ENCODE measurements at regions of chr2 and their contacts with region 1.

Region 1: DNA sequence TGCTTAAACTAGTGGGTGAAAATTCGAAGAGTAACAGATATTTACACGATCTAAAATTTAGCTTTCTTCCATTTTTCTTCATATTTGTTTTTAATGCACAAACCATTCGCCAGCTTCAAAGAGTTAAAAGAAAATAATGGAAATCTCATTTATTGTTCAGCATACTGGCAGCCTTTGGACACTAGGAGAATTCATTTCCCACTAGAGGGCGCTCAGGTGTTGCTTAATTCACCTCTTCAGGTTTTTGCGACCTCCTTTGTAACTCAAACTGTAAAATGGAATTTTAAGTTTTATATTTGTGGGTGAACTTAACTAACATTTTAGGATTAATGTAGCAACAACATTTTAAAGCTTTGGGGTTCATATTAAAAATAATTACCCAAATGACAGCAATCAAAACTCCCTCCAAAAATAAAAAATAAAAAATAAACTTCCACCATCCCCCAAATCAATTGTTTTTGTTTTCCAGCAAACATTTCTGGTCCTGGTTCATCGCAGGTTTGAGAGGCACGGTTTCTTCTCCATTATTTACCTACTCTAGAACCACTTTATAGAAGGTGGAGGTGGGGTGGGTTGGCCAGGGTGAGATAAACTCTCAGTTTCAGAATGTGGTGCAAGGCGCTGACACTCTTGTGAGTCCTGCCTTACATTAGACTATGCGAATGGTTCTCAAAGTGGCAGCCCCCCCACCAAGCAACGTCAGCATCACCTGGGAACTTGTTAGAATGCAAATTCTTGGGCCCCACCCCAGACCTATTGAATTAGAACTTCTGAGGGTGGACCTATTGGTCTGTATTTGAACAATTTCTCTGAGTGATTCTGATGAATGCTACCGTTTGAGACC is 24.7 kb upstream of the PNPT1 start:
- DNase-seq: peak; percentile 66
- ATAC-seq: peak; percentile 84
- H3K4me3 ChIP-seq: no peak overlapping the region
- H3K27ac ChIP-seq: no peak overlapping the region
- H3K4me1 ChIP-seq: peaks cover 16% of the 10 kb centered on the region
- H3K27me3 ChIP-seq: peaks cover 0 to 4% of the 10 kb centered on the region in 2 experiments; a peak in 2 of 5 replicates
- CTCF ChIP-seq: peak; percentile 80
- EP300 ChIP-seq: no peak
- POLR2A ChIP-seq: no peak
- RAD21 ChIP-seq: peak; percentile 66

Region 2: DNA sequence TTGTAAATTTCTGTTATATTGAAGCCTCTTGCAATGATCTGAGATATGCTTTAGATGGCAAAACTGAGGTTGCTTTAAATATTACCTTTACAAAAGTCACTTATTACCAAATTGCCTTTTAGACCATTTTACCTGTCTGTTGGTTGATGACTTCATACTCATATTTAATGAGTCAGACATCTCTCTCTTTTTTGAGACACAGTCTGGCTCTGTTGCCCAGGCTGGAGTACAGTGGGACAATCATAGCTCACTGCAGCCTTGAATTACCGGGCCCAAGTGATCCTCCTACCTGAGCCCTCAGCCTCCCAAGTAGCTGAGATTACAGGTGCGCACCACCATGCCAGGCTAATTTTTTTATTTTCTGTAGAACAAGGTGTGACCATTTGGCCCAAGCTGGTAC is 89.5 kb before region 1 on chr2:
- CTCF ChIA-PET with region 1: no interaction called
- POLR2A ChIA-PET with region 1: no interaction called
- in situ Hi-C with region 1: no loop called
- intact Hi-C with region 1: no loop called
- DNase-seq: no peak
- ATAC-seq: no peak
- H3K4me3 ChIP-seq: no peak overlapping the region
- H3K27ac ChIP-seq: no peak overlapping the region
- H3K4me1 ChIP-seq: no peaks in the 10 kb centered on the region
- H3K27me3 ChIP-seq: no peaks in the 10 kb centered on the region
- CTCF ChIP-seq: no peak
- EP300 ChIP-seq: no peak
- POLR2A ChIP-seq: no peak
- RAD21 ChIP-seq: no peak

Region 3: DNA sequence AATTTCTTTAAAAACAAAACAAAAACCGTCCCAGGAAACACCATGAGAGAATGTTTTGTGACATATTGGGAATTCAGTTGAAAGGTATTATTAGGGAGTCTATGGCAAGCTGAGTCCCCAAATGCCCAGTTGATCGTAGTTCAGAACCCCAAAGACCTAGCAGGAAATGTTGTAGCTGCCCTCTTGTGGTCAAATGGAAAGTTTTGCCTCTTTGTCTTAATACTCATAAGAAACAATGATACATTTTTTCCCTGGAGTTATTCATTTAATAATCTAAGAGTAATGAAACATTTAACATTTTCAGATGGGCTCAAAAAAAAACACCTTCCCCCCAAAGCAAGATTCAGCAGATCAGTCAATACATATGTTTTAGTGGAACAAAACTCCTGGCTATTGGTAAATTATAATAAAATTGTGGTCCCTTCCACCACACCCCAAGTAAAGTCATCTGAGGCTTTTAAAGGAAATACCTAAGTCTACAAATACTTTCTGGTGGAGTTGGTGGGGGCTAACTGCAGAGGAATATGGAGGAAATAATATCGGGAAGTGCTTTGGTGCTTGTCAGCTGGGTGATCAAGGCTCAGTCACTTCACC is 243.0 kb after region 1 on chr2:
- CTCF ChIA-PET with region 1: interaction called, 13 read pairs
- POLR2A ChIA-PET with region 1: no interaction called
- in situ Hi-C with region 1: no loop called
- intact Hi-C with region 1: loop called (anchors 1 kb)
- DNase-seq: peak; percentile 44
- ATAC-seq: peak; percentile 76
- H3K4me3 ChIP-seq: no peak overlapping the region
- H3K27ac ChIP-seq: no peak overlapping the region
- H3K4me1 ChIP-seq: no peaks in the 10 kb centered on the region
- H3K27me3 ChIP-seq: no peaks in the 10 kb centered on the region; a peak in 1 of 5 replicates
- CTCF ChIP-seq: peak; percentile 68
- EP300 ChIP-seq: no peak
- POLR2A ChIP-seq: no peak
- RAD21 ChIP-seq: 0 out of 2 replicates have a peak, but pooled peaks have one; percentile 38

Region 4: DNA sequence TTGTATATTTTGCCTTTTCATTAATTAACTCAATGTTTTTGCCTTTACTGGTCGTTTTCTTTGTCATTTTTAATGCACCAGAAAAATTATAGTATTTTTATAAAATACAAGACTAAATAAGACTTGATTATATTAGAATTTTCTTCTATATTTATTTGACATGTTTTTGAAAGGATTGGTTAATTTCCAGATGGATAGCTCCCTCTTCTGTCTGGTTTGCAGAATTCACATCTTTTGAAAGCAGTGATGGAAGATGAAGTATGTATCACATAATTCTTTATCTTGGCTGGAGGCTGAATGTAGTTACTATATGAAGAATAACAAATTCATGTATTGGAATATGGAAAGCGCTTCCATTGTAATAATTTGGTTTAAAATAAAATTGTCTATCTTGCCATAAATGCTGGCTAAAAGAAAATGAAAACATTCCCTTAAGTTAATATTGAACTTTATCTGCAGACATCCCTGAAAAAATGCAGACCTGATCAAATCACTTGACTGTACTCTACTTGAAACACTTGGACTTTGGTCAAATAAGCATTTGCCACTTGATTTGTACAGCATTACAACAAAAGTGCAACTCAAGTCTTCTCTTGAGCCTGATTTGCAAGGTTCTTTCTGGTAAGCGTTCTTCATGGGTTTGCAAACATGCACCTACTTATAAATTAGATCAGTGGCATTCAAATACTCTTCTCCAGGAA is 291.5 kb after region 1 on chr2:
- CTCF ChIA-PET with region 1: interaction called, 15 read pairs
- POLR2A ChIA-PET with region 1: no interaction called
- in situ Hi-C with region 1: no loop called
- intact Hi-C with region 1: loop called (anchors 1 kb)
- DNase-seq: peak; percentile 42
- ATAC-seq: no peak
- H3K4me3 ChIP-seq: no peak overlapping the region
- H3K27ac ChIP-seq: no peak overlapping the region
- H3K4me1 ChIP-seq: no peaks in the 10 kb centered on the region
- H3K27me3 ChIP-seq: 0 out of 5 replicates have a peak, but pooled peaks cover 0 to 5% of the 10 kb centered on the region in 2 experiments
- CTCF ChIP-seq: peak; percentile 63
- EP300 ChIP-seq: no peak
- POLR2A ChIP-seq: no peak
- RAD21 ChIP-seq: no peak

Region 5: DNA sequence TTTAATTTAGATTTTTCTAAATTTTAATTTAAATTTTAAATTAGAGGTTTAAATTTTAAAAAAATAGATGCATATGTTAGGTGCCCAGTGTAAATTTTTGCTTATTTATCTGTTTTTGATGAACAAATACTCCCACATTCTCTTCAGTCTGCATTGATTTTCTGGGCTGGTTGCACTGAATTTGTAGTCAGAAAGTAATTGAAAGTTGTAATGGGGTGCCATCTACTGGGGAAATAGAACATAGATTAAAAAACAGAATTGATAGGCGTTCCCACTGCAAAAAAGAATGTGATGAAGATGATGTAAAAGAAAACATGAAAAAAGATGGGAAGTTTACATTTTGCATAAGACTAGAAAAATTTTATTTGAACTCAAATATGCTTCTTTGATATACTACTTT is 413.8 kb after region 1 on chr2:
- CTCF ChIA-PET with region 1: interaction called, 7 read pairs
- POLR2A ChIA-PET with region 1: no interaction called
- in situ Hi-C with region 1: loop called (anchors 10 kb)
- intact Hi-C with region 1: loop called (anchors 1 kb)
- DNase-seq: peak; percentile 60
- ATAC-seq: peak; percentile 58
- H3K4me3 ChIP-seq: no peak overlapping the region
- H3K27ac ChIP-seq: no peak overlapping the region
- H3K4me1 ChIP-seq: no peaks in the 10 kb centered on the region
- H3K27me3 ChIP-seq: 0 out of 5 replicates have a peak, but pooled peaks cover 0 to 4% of the 10 kb centered on the region in 2 experiments
- CTCF ChIP-seq: peak; percentile 64
- EP300 ChIP-seq: no peak
- POLR2A ChIP-seq: no peak
- RAD21 ChIP-seq: 0 out of 2 replicates have a peak, but pooled peaks have one; percentile 33

Region 6: DNA sequence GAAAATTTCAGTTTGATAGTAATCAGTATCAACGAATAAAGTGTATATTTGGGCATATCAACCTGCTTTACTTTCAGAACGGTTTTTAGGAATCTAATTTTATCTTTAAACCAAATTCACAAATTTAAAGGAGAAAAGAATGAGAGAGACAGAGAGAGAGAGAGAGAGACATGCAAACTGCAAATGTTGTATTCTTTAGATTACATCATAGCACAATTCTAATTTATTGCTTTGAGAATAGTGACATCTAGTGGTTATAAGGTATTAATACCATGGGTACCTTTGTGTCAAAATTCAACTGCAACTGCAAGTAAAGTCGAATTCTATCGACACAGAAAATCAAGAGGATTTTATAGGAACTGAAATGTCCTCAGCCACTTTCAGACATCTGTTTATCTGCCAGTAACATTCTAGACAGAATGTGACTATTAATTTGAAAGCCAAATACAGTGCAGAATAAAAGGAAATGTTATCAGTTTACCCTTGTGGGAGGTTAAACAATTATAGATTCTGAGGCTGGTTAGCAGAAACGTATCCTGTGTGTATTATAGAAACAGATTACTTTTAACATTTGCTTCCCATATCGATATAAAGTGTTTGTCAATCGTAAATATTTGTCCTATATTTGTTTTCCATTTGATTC is 1798.4 kb after region 1 on chr2:
- CTCF ChIA-PET with region 1: no interaction called
- POLR2A ChIA-PET with region 1: no interaction called
- in situ Hi-C with region 1: no loop called
- intact Hi-C with region 1: loop called (anchors 10 kb)
- DNase-seq: peak; percentile 36
- ATAC-seq: peak; percentile 69
- H3K4me3 ChIP-seq: no peak overlapping the region
- H3K27ac ChIP-seq: no peak overlapping the region
- H3K4me1 ChIP-seq: no peaks in the 10 kb centered on the region
- H3K27me3 ChIP-seq: no peaks in the 10 kb centered on the region
- CTCF ChIP-seq: peak; percentile 71
- EP300 ChIP-seq: no peak
- POLR2A ChIP-seq: no peak
- RAD21 ChIP-seq: peak; percentile 54; the same call in 1 of the 2 replicates

Measured in HepG2 (cell line).